ENCODE measurements at regions of chr3 and their contacts with region 1.

Region 1: DNA sequence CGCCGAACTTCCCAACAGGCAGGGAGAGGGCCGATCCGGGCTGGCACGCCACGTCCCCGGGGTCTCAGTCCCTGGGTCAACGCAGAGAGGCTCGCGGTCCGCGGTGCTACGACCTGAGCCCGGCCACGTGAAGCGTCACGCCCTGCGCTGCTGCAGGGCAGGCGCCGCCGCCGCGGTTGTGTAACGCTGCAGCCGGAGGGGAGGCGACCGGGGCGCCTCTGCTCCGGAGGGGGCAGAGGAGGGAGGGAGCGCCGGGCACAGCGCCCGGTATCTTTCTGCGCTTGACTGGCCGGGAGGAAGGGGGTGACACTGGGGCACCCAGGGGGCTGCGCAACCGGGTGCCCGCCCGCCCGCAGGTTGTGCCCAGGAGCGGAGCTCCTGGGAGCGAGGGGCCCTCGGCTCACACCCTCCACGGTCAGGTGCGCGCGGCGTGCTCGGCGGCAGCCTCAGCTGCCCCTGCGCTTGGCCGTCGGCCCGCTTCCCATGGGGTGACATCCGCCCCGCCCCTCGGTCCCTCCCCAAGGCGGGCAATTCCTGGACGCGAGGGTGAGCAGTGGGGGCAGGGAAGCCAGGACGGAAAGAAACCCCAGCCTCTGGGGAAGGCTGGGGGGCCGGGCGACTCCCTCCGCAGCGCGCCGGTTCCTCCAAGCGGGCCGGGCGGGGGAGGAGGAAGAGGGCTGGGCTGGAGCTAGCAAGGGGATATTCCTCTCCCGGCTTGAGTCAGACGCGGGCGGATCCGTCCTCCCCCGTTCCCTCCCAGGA is 852 bp upstream of the BHLHE40 start:
- DNase-seq: peak; percentile 91
- ATAC-seq: peak; percentile 48
- H3K4me3 ChIP-seq: peak overlapping the region; percentile 73 to 91 (median 85)
- H3K4me3 Mint-ChIP-seq: peak overlapping the region; percentile 98
- H3K27ac ChIP-seq: peak overlapping the region; percentile 97 to 99
- H3K27ac Mint-ChIP-seq: peak overlapping the region; percentile 96
- H3K4me1 ChIP-seq: peaks cover 52 to 58% of the 10 kb centered on the region in 2 donors
- H3K4me1 Mint-ChIP-seq: peaks cover 62% of the 10 kb centered on the region
- H3K27me3 ChIP-seq: no peaks in the 10 kb centered on the region
- H3K27me3 Mint-ChIP-seq: no peaks in the 10 kb centered on the region
- CTCF ChIP-seq: no peak

Region 2: GRCh38 chr3:4623421-4623999 is 354.9 kb before region 1 on chr3:
- CTCF ChIA-PET with region 1: no interaction called
- POLR2A ChIA-PET with region 1: no interaction called
- intact Hi-C with region 1: no loop called
- DNase-seq: no peak
- ATAC-seq: no peak
- H3K4me3 ChIP-seq: no peak overlapping the region
- H3K4me3 Mint-ChIP-seq: no peak overlapping the region
- H3K27ac ChIP-seq: no peak overlapping the region
- H3K27ac Mint-ChIP-seq: peak overlapping the region; percentile 53
- H3K4me1 ChIP-seq: no peaks in the 10 kb centered on the region
- H3K4me1 Mint-ChIP-seq: peaks cover 28% of the 10 kb centered on the region
- H3K27me3 ChIP-seq: no peaks in the 10 kb centered on the region
- H3K27me3 Mint-ChIP-seq: no peaks in the 10 kb centered on the region
- CTCF ChIP-seq: no peak

Region 3: DNA sequence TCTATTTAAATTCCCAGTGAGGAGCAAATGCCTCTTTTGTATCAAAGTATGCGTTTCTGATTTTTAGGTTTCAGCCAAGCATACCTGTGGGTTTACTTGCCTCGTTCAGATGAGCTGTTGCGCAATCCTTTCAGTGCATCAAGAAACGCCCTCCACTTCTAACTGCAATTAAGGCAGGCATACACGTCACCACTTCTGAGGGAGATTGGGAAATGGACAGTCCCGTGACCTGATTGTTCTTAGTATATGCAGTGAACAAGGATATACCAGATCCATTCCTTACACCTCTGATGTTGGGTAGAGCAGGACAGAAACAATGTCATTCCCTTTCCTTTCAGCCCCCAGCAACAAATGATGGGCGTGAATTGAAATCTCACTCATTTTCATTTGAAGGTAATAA is 266.2 kb before region 1 on chr3:
- CTCF ChIA-PET with region 1: interaction called, 22 read pairs
- POLR2A ChIA-PET with region 1: no interaction called
- intact Hi-C with region 1: loop called (anchors 1 kb)
- DNase-seq: no peak
- ATAC-seq: no peak
- H3K4me3 ChIP-seq: no peak overlapping the region
- H3K4me3 Mint-ChIP-seq: no peak overlapping the region
- H3K27ac ChIP-seq: no peak overlapping the region
- H3K27ac Mint-ChIP-seq: no peak overlapping the region
- H3K4me1 ChIP-seq: no peaks in the 10 kb centered on the region
- H3K4me1 Mint-ChIP-seq: no peaks in the 10 kb centered on the region
- H3K27me3 ChIP-seq: no peaks in the 10 kb centered on the region
- H3K27me3 Mint-ChIP-seq: no peaks in the 10 kb centered on the region
- CTCF ChIP-seq: no peak

Region 4: DNA sequence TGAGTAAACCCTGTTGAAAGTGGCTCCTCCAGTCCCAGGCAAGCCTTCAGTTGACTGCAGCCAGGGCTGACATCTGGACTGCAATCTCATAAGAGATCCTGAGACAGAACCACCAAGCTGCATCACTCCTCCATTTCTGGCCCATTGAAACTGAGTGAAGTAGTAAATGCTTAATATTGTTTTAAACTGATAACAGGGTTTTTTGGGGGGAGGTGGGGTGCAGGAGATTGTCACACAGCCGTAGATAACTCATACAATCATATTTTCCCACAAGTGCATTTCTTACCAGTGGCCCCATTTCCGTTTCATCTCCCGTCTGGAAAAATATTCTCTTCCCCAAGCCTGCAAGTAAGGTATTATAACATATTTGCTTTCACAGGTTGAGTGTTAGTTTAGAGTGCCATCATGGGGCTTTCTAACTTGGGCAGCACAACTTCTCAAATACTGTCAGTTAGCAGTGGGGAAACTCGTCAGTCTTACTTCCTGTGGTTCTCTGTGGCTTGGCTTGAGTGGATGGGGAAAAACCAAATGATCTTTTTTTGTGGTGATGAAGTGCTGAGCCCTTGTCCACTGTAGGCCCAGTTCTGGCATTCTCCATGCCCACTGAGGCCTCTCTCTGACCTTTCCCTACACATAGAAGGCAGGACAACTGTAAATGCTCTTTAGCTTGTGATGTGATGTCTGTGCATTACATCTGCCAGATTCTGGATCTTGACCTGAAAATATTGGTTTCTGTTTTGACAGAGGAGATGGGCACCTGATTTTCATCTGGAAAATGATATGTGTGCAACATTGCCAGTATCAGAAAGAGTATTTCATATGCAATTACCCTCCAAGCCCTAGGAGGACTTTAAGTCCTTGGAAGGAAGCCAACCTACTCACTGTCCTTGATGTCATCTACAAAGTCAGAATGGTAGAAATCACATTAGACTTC is 89.2 kb before region 1 on chr3:
- CTCF ChIA-PET with region 1: no interaction called
- POLR2A ChIA-PET with region 1: no interaction called
- intact Hi-C with region 1: loop called (anchors 5 kb)
- DNase-seq: peak; percentile 25
- ATAC-seq: peak; percentile 33
- H3K4me3 ChIP-seq: no peak overlapping the region
- H3K4me3 Mint-ChIP-seq: no peak overlapping the region
- H3K27ac ChIP-seq: no peak overlapping the region
- H3K27ac Mint-ChIP-seq: no peak overlapping the region
- H3K4me1 ChIP-seq: peaks cover 8 to 11% of the 10 kb centered on the region in 2 donors
- H3K4me1 Mint-ChIP-seq: peaks cover 14% of the 10 kb centered on the region
- H3K27me3 ChIP-seq: no peaks in the 10 kb centered on the region
- H3K27me3 Mint-ChIP-seq: no peaks in the 10 kb centered on the region
- CTCF ChIP-seq: no peak

Region 5: DNA sequence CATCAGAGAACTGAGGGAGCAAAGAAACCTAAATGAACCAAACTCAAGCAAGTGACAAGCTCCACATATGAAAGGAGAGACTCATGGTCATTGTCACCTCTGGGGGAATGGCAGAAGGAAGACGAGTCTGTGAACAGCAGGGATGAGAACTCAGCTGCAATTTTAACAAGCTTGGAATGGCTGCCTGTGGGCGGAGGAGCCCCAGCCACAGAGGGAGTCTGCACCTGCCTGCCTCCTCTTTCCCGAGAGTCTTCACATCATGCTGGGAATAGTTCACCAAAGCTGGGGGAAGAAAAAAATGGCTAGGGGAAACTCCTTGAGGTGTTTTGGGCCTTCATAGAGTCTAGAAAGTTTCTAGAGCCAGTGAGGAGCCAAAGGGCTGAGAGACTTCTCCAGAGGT is 20.4 kb before region 1 on chr3:
- CTCF ChIA-PET with region 1: interaction called, 10 read pairs
- POLR2A ChIA-PET with region 1: interaction called, 3 read pairs
- intact Hi-C with region 1: no loop called
- DNase-seq: no peak
- ATAC-seq: no peak
- H3K4me3 ChIP-seq: no peak overlapping the region
- H3K4me3 Mint-ChIP-seq: no peak overlapping the region
- H3K27ac ChIP-seq: no peak overlapping the region
- H3K27ac Mint-ChIP-seq: no peak overlapping the region
- H3K4me1 ChIP-seq: no peaks in the 10 kb centered on the region
- H3K4me1 Mint-ChIP-seq: no peaks in the 10 kb centered on the region
- H3K27me3 ChIP-seq: peaks cover 0 to 2% (median 0%) of the 10 kb centered on the region in 4 experiments
- H3K27me3 Mint-ChIP-seq: no peaks in the 10 kb centered on the region
- CTCF ChIP-seq: no peak

Region 6: DNA sequence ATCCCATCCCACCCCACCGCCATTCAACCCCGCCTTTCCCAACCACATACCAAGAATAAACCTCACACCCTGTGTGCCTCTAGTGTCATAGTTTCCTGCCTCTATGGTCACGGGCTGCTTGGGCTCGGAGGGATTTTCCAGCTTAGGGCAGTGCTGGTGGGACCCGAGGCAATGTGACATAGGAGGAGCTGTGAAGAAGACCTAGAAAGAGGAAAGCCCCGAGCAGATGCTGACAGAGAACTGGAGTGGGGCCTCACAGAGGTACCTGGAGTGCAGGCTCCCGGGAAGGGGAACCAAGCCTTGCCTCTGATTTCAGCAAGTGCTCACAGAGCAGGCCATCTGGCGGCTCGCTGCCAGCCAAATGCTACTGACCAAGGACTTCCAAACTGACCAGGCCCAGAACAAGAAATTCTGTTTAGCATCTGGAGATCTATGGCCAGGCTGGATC is 28.4 kb after region 1 on chr3:
- CTCF ChIA-PET with region 1: interaction called, 55 read pairs
- POLR2A ChIA-PET with region 1: interaction called, 117 read pairs
- intact Hi-C with region 1: loop called (anchors 1 kb)
- DNase-seq: peak; percentile 96
- ATAC-seq: peak; percentile 50
- H3K4me3 ChIP-seq: no peak overlapping the region
- H3K4me3 Mint-ChIP-seq: peak overlapping the region; percentile 70
- H3K27ac ChIP-seq: peak overlapping the region; percentile 79 to 88
- H3K27ac Mint-ChIP-seq: peak overlapping the region; percentile 92
- H3K4me1 ChIP-seq: peaks cover 56 to 59% of the 10 kb centered on the region in 2 donors
- H3K4me1 Mint-ChIP-seq: peaks cover 56% of the 10 kb centered on the region
- H3K27me3 ChIP-seq: no peaks in the 10 kb centered on the region
- H3K27me3 Mint-ChIP-seq: no peaks in the 10 kb centered on the region
- CTCF ChIP-seq: no peak

Region 7: DNA sequence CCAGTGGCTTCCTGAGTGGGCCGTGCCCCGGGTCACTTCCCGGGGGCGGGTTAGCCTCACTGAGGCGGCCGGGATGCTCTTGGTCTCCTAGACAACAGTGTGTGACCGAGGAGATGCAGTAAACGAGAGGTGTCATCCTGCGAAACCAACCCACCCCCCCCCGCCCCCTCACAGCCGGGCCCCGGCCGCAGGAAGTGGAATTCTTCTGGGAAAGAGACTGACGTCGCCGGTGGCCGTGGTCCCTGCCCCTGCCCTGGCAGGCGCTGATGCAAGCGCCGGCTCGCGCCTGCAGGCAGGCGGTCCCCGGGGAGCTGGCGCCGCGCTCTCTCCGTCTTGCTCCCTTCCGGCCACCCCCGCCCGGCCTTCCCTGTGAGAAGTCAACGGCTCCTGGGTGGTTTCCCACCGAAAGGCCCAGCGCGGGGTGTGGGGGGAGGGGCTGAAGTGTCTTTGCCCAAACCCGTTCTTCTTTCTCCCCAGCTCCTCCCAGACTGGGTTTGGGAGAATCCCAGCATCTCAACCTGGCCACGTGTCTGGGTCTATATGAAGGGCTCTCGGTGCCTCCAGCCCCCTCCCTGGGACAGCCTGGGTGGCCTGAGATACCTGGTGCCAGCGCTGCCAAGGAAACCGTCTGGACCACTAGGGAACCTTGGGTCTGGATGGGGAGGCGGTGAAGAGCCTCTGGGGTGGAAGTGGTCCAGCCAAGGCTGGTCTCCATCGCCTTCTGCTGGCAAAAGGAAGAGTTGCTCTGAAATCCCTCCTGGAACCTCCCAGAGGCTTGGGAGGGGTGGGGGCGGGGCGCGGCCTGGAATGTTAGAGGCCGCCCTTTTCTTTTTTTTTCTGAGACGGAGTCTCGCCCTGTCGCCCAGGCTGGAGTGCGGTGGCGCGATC is 48.2 kb after region 1 on chr3:
- CTCF ChIA-PET with region 1: interaction called, 77 read pairs
- POLR2A ChIA-PET with region 1: interaction called, 7 read pairs
- intact Hi-C with region 1: loop called (anchors 1 kb)
- DNase-seq: peak; percentile 80
- ATAC-seq: peak; percentile 78
- H3K4me3 ChIP-seq: peak overlapping the region; percentile 21 to 64 (median 57)
- H3K4me3 Mint-ChIP-seq: peak overlapping the region; percentile 91
- H3K27ac ChIP-seq: peak overlapping the region in 1 of 2 donors; percentile 65
- H3K27ac Mint-ChIP-seq: peak overlapping the region; percentile 84
- H3K4me1 ChIP-seq: peaks cover 4 to 18% of the 10 kb centered on the region in 2 donors
- H3K4me1 Mint-ChIP-seq: peaks cover 41% of the 10 kb centered on the region
- H3K27me3 ChIP-seq: no peaks in the 10 kb centered on the region
- H3K27me3 Mint-ChIP-seq: no peaks in the 10 kb centered on the region
- CTCF ChIP-seq: peak; percentile 59

Region 8: GRCh38 chr3:5187156-5187919 is 209.0 kb after region 1 on chr3 and contains the start of gene EDEM1:
- CTCF ChIA-PET with region 1: no interaction called
- POLR2A ChIA-PET with region 1: interaction called, 3 read pairs
- intact Hi-C with region 1: loop called (anchors 5 kb)
- DNase-seq: peak; percentile 96
- ATAC-seq: peak; percentile 88
- H3K4me3 ChIP-seq: peak within 1 kb of the TSS; percentile 91 to 99 (median 94)
- H3K4me3 Mint-ChIP-seq: peak within 1 kb of the TSS; percentile 99
- H3K27ac ChIP-seq: peak within 1 kb of the TSS; percentile 94 to 96
- H3K27ac Mint-ChIP-seq: peak within 1 kb of the TSS; percentile 99
- H3K4me1 ChIP-seq: peaks cover 69 to 75% of the 10 kb centered on the region in 2 donors
- H3K4me1 Mint-ChIP-seq: peaks cover 69% of the 10 kb centered on the region
- H3K27me3 ChIP-seq: no peaks in the 10 kb centered on the region
- H3K27me3 Mint-ChIP-seq: no peaks in the 10 kb centered on the region
- CTCF ChIP-seq: no peak
- total RNA-seq, gene EDEM1: 167 and 177 TPM in 2 replicates

Measured in B cell (primary cell).